H1 (cell line): ENCODE measurements at regions of chr3 and their contacts with region 1.

Region 1: DNA sequence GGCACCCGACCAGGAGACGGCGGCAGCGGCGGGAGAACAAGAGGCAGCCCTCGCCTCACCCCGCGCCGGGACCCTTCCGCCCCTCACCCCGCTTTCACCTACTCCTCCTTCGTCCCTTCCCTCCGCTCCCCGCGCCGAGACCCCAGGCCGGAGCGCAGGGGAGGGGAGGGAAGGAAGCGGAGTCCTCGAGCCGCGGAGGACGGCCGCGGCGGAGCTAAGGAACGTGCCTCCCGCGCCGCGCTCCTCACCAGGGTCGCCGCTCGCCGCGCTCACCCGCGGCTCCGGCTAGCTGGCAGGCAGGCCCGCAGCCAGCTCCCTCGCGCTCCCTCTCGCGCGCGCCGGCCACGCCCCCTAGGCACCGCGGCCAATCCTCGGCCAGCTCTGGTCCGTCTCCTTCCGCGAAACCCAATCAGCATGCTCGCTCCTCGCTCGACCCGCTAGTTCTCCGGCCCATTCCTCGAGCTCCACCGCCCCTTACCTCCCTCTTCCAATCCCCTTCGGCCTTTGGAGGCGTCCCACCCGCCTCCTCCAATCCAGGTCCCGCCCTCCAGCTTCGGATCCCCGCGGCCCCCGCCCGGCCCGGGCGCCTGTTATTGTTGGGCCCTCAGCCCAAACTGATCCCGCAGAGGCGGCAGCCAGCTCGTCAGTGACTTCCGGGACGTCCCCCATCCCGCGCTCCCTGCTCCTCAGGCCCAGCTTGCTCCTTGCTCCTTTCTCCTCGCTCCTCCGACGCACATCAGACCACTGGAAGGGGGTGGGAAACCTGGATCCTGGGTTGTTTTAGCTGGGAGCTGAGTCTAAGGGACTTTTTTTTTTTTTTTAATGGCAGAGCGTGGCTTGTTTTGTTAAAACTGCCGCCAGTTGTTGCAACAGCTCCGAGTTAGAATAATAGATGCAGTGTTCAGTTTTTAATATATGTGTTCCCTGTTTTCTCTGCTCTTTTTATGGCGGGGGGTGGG is at the start of gene DCBLD2:
- DNase-seq: peak; percentile 93 to 96
- H3K4me3 ChIP-seq: peak within 1 kb of the TSS; percentile 86 to 100 (median 92)
- H3K27ac ChIP-seq: peak within 1 kb of the TSS; percentile 93
- H3K4me1 ChIP-seq: peaks cover 0 to 11% (median 4%) of the 10 kb centered on the region in 4 experiments; a peak in 4 of 7 replicates
- H3K27me3 ChIP-seq: no peaks in the 10 kb centered on the region
- CTCF ChIP-seq: no peak
- EP300 ChIP-seq: no peak
- POLR2A ChIP-seq: peak; percentile 97
- RAD21 ChIP-seq: no peak; a peak in 1 of 4 replicates
- total RNA-seq, gene DCBLD2: 59.1 and 63.8 TPM in 2 replicates

Region 2: GRCh38 chr3:98695796-98696195 is 205.9 kb before region 1 on chr3:
- CTCF ChIA-PET with region 1: no interaction called
- POLR2A ChIA-PET with region 1: no interaction called
- DNase-seq: no peak
- H3K4me3 ChIP-seq: no peak overlapping the region
- H3K27ac ChIP-seq: no peak overlapping the region
- H3K4me1 ChIP-seq: no peaks in the 10 kb centered on the region
- H3K27me3 ChIP-seq: no peaks in the 10 kb centered on the region
- CTCF ChIP-seq: no peak
- EP300 ChIP-seq: no peak
- POLR2A ChIP-seq: no peak
- RAD21 ChIP-seq: no peak

Region 3: GRCh38 chr3:98761643-98762229 is 139.9 kb before region 1 on chr3:
- CTCF ChIA-PET with region 1: no interaction called
- POLR2A ChIA-PET with region 1: no interaction called
- DNase-seq: no peak
- H3K4me3 ChIP-seq: no peak overlapping the region
- H3K27ac ChIP-seq: no peak overlapping the region
- H3K4me1 ChIP-seq: peaks cover 0 to 4% (median 0%) of the 10 kb centered on the region in 4 experiments; a peak in 1 of 7 replicates
- H3K27me3 ChIP-seq: no peaks in the 10 kb centered on the region
- CTCF ChIP-seq: no peak
- EP300 ChIP-seq: no peak
- POLR2A ChIP-seq: no peak
- RAD21 ChIP-seq: no peak

Region 4: GRCh38 chr3:98884675-98885371 is 16.8 kb before region 1 on chr3:
- CTCF ChIA-PET with region 1: no interaction called
- POLR2A ChIA-PET with region 1: interaction called, 54 read pairs
- DNase-seq: no peak
- H3K4me3 ChIP-seq: no peak overlapping the region
- H3K27ac ChIP-seq: no peak overlapping the region
- H3K4me1 ChIP-seq: peaks cover 0 to 18% (median 6%) of the 10 kb centered on the region in 4 experiments; a peak in 4 of 7 replicates
- H3K27me3 ChIP-seq: peaks cover 0 to 1% (median 0%) of the 10 kb centered on the region in 4 experiments; a peak in 1 of 7 replicates
- CTCF ChIP-seq: no peak
- EP300 ChIP-seq: no peak
- POLR2A ChIP-seq: no peak
- RAD21 ChIP-seq: no peak

Region 5: GRCh38 chr3:98930413-98930812 is 28.7 kb after region 1 on chr3:
- CTCF ChIA-PET with region 1: no interaction called
- POLR2A ChIA-PET with region 1: no interaction called
- DNase-seq: no peak
- H3K4me3 ChIP-seq: no peak overlapping the region
- H3K27ac ChIP-seq: no peak overlapping the region
- H3K4me1 ChIP-seq: no peaks in the 10 kb centered on the region
- H3K27me3 ChIP-seq: no peaks in the 10 kb centered on the region
- CTCF ChIP-seq: no peak
- EP300 ChIP-seq: no peak
- POLR2A ChIP-seq: no peak
- RAD21 ChIP-seq: no peak